Activated naive CD8-positive, alpha-beta T cell treated with anti-CD3 and anti-CD28 coated beads, Interleukin-2, amount 10 ng/mL, durations not matched to agents 7 days and 5 days (primary cell): ENCODE measurements at regions of chr6 and their contacts with region 1.

Region 1: GRCh38 chr6:26025894-26026832 is 61.1 kb upstream of the HFE start:
- DNase-seq: peak; percentile 86
- ATAC-seq: peak; percentile 35
- H3K4me3 Mint-ChIP-seq: peak overlapping the region; percentile 89
- H3K27ac Mint-ChIP-seq: peak overlapping the region; percentile 99
- H3K4me1 Mint-ChIP-seq: peaks cover 75% of the 10 kb centered on the region
- H3K27me3 Mint-ChIP-seq: no peaks in the 10 kb centered on the region

Region 2: DNA sequence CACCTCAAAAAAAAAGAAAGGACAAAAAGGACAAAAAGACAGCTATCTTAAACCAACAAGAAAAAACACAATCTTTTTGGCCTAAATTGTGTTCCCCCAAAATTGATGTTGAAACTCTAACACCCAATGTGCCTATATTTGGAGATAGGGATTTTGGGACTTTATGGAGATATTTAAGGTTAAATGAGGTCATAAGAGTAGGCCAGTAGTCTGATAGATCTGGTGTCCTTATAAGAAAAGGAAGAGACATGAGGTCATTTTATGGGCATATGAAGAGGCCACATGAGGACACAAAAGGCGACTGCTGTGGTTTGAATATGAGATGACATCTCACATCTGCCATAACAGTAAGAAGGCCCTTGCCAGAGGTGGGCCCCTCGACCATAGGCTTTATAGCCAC is 14.1 kb before region 1 on chr6:
- POLR2A ChIA-PET with region 1: interaction called, 43 read pairs
- DNase-seq: no peak
- ATAC-seq: no peak
- H3K4me3 Mint-ChIP-seq: no peak overlapping the region
- H3K27ac Mint-ChIP-seq: no peak overlapping the region
- H3K4me1 Mint-ChIP-seq: peaks cover 2% of the 10 kb centered on the region
- H3K27me3 Mint-ChIP-seq: no peaks in the 10 kb centered on the region

Region 3: GRCh38 chr6:26183581-26184366 is 157.6 kb after region 1 on chr6:
- POLR2A ChIA-PET with region 1: interaction called, 25 read pairs
- DNase-seq: peak; percentile 78
- ATAC-seq: peak; percentile 85
- H3K4me3 Mint-ChIP-seq: peak overlapping the region; percentile 96
- H3K27ac Mint-ChIP-seq: peak overlapping the region; percentile 99
- H3K4me1 Mint-ChIP-seq: peaks cover 48% of the 10 kb centered on the region
- H3K27me3 Mint-ChIP-seq: no peaks in the 10 kb centered on the region

Region 4: DNA sequence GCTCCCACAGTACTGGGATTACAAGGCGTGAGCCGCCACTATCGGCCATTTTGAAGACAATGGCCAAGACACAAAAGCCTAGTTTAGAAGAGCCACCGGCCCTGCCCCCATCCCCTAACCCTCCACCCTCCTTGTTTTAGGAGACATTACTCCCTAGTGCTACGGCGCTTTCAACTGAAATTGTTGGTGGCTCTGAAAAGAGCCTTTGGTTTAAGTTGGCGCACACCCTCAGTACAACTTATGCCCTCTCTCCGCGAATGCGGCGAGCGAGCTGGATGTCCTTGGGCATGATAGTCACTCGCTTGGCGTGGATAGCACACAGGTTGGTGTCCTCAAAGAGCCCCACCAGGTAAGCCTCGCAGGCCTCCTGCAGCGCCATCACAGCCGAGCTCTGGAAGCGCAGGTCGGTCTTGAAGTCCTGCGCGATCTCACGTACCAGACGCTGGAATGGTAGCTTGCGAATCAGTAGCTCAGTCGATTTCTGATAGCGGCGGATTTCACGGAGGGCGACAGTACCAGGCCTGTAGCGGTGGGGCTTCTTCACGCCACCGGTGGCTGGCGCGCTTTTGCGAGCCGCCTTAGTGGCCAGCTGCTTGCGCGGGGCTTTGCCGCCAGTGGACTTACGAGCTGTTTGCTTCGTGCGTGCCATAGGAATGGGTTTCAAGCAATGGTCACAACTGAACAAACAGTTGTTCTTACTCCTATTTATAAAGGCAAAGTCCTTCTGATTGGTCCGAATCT is 224.0 kb after region 1 on chr6:
- POLR2A ChIA-PET with region 1: interaction called, 43 read pairs
- DNase-seq: peak; percentile 79
- ATAC-seq: peak; percentile 53
- H3K4me3 Mint-ChIP-seq: peak overlapping the region; percentile 90
- H3K27ac Mint-ChIP-seq: peak overlapping the region; percentile 99
- H3K4me1 Mint-ChIP-seq: peaks cover 16% of the 10 kb centered on the region
- H3K27me3 Mint-ChIP-seq: no peaks in the 10 kb centered on the region

Region 5: GRCh38 chr6:27146706-27147505 is 1120.7 kb after region 1 on chr6:
- POLR2A ChIA-PET with region 1: interaction called, 32 read pairs
- DNase-seq: peak; percentile 83
- ATAC-seq: peak; percentile 71
- H3K4me3 Mint-ChIP-seq: no peak overlapping the region
- H3K27ac Mint-ChIP-seq: no peak overlapping the region
- H3K4me1 Mint-ChIP-seq: peaks cover 18% of the 10 kb centered on the region
- H3K27me3 Mint-ChIP-seq: no peaks in the 10 kb centered on the region

Region 6: DNA sequence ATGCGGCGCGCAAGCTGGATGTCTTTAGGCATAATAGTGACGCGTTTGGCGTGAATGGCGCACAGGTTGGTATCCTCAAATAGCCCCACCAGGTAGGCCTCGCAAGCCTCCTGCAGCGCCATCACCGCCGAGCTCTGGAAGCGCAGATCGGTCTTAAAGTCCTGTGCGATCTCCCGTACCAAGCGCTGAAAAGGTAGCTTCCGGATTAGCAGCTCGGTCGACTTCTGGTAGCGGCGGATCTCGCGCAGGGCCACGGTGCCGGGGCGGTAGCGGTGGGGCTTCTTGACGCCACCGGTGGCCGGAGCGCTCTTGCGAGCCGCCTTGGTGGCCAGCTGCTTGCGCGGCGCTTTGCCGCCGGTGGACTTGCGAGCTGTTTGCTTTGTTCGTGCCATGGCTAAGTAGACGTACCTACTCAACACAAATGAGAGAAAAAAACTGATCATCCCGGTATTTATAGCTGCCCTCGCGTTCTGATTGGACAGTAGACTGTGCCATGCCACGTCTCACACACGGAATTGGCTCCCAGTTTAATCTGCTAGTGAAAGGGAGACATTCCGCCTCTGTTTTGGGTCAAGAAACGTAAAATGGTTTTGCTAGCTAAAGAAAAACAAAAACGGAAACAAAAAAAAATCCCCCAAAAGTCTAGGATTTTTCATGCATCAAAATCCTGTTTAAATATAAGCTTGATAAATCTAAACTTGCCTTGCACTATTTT is 1845.9 kb after region 1 on chr6:
- POLR2A ChIA-PET with region 1: interaction called, 113 read pairs
- DNase-seq: peak; percentile 80
- ATAC-seq: peak; percentile 63
- H3K4me3 Mint-ChIP-seq: peak overlapping the region; percentile 92
- H3K27ac Mint-ChIP-seq: peak overlapping the region; percentile 93
- H3K4me1 Mint-ChIP-seq: peaks cover 44% of the 10 kb centered on the region
- H3K27me3 Mint-ChIP-seq: no peaks in the 10 kb centered on the region